Sigmoid colon (tissue), 7 donors: ENCODE measurements at regions of chr1 and their contacts with region 1.

Region 1: DNA sequence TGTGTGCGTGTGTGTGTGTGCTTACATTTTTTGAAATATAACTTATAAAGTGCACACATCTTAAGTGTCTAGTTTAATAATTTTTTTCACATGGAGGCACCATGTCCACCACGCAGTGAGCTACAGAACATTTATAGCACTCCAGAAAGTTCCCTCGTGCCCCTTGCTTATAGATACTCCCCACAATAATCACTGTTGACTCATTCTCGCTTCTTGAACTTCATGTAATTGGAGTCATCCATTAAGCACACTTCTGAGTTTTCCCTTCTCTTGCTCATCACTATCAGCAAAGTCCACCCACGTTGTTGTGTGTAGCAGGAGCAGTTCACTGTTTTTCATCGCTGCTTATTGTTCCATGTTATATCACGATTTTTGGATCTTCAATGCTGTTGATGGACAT is 78.4 kb upstream of the DISP3 start:
- DNase-seq: no peak
- H3K4me3 ChIP-seq: no peak overlapping the region
- H3K27ac ChIP-seq: no peak overlapping the region
- H3K4me1 ChIP-seq: no peaks in the 10 kb centered on the region
- H3K27me3 ChIP-seq: peaks cover 0 to 33% (median 8%) of the 10 kb centered on the region in 3 donors
- CTCF ChIP-seq: no peak
- EP300 ChIP-seq: no peak
- POLR2A ChIP-seq: no peak

Region 2: GRCh38 chr1:11531314-11531870 is 130.8 kb after region 1 on chr1:
- intact Hi-C with region 1: no loop called
- DNase-seq: no peak
- H3K4me3 ChIP-seq: no peak overlapping the region
- H3K27ac ChIP-seq: no peak overlapping the region
- H3K4me1 ChIP-seq: no peaks in the 10 kb centered on the region
- H3K27me3 ChIP-seq: peaks cover 0 to 9% (median 0%) of the 10 kb centered on the region in 3 donors
- CTCF ChIP-seq: no peak
- EP300 ChIP-seq: no peak
- POLR2A ChIP-seq: no peak

Region 3: DNA sequence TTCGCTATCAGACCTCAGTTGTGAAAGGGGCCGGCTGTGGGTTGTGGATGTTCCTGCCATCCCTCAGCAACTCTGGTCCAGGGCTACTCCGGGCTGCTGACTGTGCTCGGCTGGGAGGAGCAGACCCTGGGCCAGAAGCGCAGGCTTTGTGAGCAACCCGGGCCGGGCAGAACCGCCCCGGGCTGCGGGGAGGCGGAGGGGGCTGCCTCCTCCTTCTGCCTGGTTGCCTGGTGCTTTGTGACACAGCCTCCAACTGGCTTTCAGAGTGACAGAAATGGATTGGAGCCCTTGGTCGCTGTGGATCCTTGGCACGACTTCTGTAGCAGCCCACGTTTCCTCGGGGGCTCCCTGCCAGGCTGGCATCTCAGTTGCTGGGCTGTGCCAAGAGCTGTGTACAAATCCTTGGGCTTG is 301.0 kb after region 1 on chr1:
- intact Hi-C with region 1: loop called (anchors 5 kb)
- DNase-seq: no peak
- H3K4me3 ChIP-seq: no peak overlapping the region
- H3K27ac ChIP-seq: no peak overlapping the region
- H3K4me1 ChIP-seq: peaks cover 0 to 11% (median 8%) of the 10 kb centered on the region in 4 donors
- H3K27me3 ChIP-seq: peaks cover 0 to 86% (median 14%) of the 10 kb centered on the region in 3 donors
- CTCF ChIP-seq: no peak
- EP300 ChIP-seq: no peak
- POLR2A ChIP-seq: no peak